ENCODE measurements at regions of chr2 and their contacts with region 1.

Region 1: DNA sequence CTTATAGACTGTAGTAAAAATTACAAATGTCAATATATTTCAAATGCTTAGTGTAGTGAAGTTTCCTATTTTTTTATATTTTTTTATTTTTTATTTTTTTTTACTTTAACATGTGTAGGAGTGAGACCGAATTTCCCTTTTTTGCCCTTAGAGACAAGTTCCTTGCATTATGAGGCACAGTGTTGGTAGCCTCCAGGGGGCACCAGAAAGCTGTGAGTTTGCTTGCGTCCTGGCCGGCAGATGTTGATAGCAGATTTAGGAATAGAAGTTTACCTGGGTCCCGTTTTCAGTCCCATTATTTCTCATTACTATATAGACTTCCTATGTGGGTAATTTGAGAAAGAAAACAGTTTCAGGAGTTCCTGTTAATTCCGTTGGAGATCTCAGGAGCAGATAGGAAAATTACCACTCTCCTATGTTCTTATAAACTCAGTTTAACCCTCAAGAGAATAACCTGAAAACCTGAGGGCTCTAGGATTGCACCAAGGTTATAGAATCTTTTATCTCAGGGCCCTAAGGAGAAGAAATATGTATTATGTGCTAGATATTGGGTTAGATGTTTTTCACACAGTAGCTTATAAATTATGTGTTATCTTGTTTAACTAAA is 157.5 kb upstream of the SESTD1 start:
- DNase-seq: peak; percentile 24
- CTCF ChIP-seq: peak; percentile 79

Region 2: DNA sequence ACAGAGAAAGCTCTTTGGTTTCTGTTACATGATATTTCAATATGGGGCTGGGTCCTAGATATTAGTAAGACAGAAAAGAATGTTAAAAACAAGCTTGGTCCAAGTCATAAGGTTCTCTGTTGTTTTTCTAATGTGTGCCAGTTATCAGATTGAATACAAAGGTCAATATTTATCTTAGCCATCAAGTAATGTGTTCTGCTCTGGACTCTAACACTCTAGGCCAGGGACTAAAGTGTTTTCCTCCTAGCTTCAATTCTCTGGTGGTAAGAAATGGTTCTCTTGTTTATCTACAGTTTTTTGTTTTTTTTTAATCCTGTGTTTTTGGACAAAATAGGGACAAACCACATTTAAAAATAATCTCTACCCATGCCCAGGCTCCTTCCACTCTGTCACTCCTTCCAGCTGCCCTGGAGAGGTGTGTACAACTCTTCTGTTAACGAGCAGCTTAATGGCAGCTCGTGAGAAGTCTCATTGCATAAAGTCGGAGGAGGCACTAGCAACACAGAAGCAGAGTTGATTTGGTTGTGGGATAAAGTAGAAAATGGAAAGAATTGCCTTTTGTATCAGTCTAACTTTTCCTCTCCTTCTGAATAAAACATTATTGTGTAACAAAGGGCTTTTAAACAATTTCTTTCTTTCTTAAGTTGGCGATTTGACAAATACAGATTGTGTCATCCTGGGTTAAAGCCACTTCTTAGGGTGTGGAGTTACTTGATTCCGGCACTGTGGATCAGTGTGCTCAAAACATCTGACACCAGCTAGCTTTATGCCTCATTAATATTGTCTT is 149.5 kb before region 1 on chr2:
- CTCF ChIA-PET with region 1: no interaction called
- POLR2A ChIA-PET with region 1: no interaction called
- DNase-seq: no peak
- CTCF ChIP-seq: no peak

Region 3: DNA sequence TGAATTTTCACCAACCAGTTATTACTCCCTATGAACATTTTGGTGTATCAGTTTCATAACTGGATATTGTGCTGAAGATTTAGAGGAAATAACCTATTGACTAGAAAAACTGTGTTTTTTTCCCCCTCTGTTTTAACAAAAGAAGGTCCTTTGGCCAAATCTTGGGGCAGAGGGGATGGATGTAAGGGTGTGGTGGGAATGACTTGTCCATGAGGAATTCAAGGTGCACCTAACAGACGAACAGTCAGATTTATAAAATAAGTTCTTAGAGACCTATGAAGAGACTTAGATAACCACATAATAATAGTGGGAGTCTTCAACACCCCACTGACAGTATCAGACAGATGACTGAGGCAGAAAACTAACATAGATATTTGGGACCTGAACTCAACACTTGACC is 38.2 kb before region 1 on chr2:
- CTCF ChIA-PET with region 1: no interaction called
- POLR2A ChIA-PET with region 1: no interaction called
- DNase-seq: no peak
- CTCF ChIP-seq: no peak

Region 4: DNA sequence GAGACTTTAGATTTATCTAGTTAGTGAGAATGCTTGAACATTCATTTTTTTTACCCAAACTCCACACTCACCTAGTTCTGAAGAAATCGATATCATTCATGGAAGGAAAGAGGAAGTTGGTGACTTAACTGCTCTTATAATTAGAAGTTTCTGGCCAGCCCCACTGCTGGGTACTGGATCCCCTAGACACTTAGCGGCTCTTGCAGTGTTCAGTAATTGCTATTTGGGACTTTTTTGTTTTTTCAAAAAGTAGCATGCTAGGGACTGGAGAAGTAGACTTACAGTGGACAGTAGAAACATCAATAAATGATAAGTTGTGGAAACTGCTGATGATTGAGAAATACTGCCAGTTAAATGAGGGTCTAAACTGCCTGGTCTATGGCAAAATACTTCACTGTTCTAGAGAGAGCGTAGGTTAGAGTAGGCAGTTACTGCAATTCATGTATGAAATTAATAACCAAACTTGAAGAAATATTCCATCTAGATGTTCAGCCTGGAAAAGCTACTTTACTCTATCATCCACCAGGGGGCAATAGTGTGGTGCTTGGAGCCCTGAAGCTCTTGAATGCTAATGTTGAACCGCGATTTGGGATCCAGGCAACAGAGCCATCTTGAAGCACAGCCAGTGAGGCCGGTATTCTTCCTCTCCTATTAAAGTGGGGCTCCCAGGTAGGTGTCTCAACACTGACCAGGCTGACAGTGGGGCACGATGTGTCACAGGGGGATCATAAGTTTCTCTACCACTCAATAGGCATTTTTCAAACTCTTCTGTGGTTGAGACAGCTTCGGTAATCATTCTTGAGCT is 11.4 kb before region 1 on chr2:
- CTCF ChIA-PET with region 1: interaction called, 17 read pairs
- POLR2A ChIA-PET with region 1: no interaction called
- DNase-seq: peak; percentile 41
- CTCF ChIP-seq: peak; percentile 60

Region 5: DNA sequence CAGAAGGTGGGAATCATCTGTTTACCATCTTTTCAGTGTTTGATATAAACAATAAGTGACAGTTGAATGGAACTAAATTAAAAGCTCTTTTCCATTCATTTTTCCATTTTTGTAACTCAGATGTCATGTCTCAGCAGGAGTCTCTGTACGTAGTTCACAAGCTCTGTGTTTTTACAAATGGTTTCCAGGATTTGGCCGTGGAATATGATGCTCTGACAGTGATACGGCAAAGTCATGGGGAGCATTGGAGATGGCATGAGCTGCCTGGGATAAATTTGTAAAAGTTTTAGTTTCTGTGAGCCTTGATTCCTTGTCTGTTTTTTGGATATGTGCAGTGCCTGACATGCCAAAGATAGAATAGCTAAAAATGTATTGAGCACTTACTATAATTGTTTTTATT is 10.6 kb after region 1 on chr2:
- CTCF ChIA-PET with region 1: interaction called, 16 read pairs
- POLR2A ChIA-PET with region 1: no interaction called
- DNase-seq: no peak
- CTCF ChIP-seq: no peak

Region 6: GRCh38 chr2:179440642-179441251 is 18.6 kb after region 1 on chr2:
- CTCF ChIA-PET with region 1: interaction called, 18 read pairs
- POLR2A ChIA-PET with region 1: no interaction called
- DNase-seq: peak; percentile 33
- CTCF ChIP-seq: peak; percentile 50

Region 7: DNA sequence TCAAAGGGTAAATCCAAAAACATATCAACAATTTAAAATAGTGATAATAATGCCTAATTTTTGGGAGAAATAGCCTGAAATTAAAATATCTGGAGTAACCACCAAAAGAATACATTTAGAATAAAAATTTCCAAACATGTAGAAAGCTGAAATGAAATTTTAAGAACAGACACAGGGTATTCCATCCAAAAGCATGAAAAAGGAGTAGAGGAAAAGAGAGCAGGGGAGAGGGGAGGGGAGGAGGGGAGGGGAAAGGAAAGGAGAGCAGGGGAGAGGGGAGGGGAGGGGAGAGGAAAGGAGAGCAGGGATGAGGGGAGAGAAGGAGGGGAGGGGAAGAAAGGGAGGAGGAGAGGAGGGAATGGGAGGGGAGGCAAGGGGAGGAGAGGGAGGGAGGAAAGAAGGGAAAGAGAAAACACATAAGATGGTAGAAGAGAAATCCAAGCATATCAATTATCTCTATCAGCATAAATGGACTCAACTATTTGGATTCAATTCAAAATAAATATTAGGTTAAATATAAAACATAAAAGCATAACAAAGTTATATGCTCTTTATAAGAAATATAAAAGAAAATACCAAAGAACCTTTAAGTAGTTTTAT is 298.1 kb after region 1 on chr2:
- CTCF ChIA-PET with region 1: no interaction called
- POLR2A ChIA-PET with region 1: no interaction called
- DNase-seq: no peak
- CTCF ChIP-seq: no peak

Measured in GM10248 (cell line).